Left ventricle myocardium inferior (tissue), 1 donor: ENCODE measurements at regions of chr5 and their contacts with region 1.

Region 1: DNA sequence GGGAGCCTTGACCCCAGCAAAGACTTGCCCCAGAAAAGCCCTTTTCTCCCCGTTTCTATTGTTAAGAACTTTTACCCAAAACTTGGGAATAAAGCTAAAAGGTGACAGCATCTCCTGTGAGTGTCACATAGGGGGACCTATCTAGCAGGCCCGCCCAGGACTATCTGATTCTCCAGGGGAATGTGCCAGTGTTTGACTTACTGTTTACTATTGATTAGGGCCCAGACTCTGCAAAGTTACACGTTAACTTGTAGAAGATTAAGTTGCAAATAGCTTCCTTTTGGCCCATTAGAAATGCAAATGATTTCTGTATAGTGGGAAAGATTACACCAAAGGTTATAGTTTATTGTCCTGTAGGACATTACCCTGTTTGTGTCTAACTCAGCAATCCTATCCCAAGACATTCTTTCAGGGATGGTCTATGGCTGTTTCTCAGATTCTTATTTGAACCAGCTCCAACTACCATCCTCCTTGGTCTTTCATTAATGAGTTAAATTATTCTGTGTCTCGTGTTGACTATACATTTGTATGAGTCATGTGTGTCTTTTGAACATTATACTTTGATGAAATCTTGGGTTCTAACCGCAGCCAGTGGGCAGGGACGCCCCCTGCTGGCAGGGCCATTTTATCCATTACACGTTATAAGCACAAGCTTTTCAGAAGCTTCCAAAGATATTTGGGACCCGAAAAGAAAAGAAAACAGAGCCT is 60.7 kb downstream of the HRH2 start:
- DNase-seq: peak; percentile 68
- H3K4me3 ChIP-seq: no peak overlapping the region
- H3K27ac ChIP-seq: no peak overlapping the region
- H3K4me1 ChIP-seq: peaks cover 10% of the 10 kb centered on the region
- H3K27me3 ChIP-seq: no peaks in the 10 kb centered on the region
- CTCF ChIP-seq: peak; percentile 77

Region 2: DNA sequence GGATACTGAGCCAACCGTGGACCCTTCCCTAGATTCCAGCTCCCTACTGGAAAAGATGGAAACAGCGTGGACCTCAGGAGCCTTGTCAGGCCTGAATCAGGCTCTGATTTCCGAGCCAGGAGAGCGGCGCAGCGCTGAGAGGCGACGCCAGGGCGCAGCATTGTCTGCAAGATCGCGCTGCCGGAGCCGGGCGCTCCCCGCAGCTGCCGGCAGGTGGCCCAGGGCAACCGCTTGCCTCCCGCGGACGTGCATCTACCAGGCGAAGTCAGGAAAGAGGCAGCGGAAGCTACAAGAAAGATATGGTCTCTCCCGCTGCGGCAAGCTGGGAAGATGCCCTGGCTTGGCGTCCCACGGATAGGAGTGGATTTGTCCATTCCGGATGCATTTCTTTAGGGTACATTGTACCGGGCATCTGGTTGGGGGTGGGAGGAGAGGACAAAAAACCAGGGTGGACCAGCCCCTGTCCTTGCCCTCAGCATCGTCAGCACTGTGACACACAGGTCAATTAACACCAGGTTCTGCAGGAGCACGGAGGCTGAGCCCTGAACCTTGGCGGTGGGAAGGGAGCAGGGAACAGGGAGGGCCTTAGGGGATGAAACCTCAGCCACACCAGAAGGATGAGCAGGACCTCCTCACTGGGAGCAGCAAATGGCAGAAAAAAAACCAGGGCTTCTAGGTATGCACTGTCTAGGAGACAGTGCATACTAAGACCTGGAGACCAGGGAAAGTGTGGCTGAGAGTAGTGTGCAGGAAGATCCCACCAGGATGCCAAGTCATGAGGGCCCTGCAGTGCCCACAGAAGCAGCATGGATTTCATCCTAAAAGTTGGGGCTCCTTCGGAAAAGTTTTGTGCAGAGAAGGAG is 184.3 kb before region 1 on chr5:
- intact Hi-C with region 1: loop called (anchors 5 kb)
- DNase-seq: peak; percentile 78
- H3K4me3 ChIP-seq: peak overlapping the region; percentile 39
- H3K27ac ChIP-seq: no peak overlapping the region
- H3K4me1 ChIP-seq: peaks cover 8% of the 10 kb centered on the region
- H3K27me3 ChIP-seq: no peaks in the 10 kb centered on the region
- CTCF ChIP-seq: peak; percentile 99

Region 3: DNA sequence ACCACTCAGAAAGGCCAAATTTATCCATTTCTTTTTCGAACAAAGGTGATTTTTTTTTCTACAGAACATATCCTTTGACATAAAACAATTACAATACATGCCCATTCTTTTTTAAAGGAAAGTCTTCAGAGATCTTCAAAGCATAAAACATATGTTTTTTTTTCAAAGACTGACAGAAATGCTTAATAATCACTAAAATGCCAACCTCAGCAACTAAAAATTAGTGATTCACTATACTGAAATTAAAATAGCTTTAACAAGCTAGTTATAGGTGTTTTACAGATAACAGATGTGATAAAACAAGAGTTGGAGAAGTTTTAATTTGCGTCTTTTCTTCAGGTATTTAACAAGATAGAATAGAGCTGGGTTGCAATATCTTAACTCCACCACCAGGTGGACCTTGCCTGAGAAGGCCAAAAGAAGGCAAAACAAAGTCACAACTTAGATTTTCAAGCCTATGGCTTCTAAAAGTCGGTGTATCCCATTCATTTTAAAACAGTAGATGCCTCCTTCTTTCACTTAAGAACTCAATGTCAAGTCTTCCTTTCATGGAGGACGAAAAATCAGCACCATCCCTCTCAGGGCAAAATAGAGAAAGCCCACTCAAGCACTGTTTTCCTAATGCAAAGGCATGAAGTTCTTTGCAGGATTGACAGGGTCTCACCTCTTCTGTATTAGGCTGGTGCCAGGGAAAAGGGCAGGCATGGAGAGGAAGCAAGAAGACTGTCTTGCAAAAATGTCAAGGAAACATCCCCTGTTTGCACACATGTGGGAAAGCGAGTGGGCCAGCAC is 121.7 kb after region 1 on chr5:
- intact Hi-C with region 1: no loop called
- DNase-seq: no peak
- H3K4me3 ChIP-seq: no peak overlapping the region
- H3K27ac ChIP-seq: no peak overlapping the region
- H3K4me1 ChIP-seq: no peaks in the 10 kb centered on the region
- H3K27me3 ChIP-seq: peaks cover 19% of the 10 kb centered on the region
- CTCF ChIP-seq: peak; percentile 61